CD4-positive, alpha-beta T cell (primary cell): ENCODE measurements at regions of chr1 and their contacts with region 1.

Region 1: GRCh38 chr1:42035830-42036604 is 117.2 kb upstream of the GUCA2B start:
- DNase-seq: peak; percentile 94 to 99 (median 97)
- ATAC-seq: peak; percentile 91
- H3K4me3 ChIP-seq: peak overlapping the region; percentile 70
- H3K4me3 Mint-ChIP-seq: peak overlapping the region; percentile 81
- H3K27ac ChIP-seq: peak overlapping the region in 1 of 2 donors; percentile 14
- H3K27ac Mint-ChIP-seq: peak overlapping the region; percentile 74
- H3K4me1 ChIP-seq: peaks cover 40% of the 10 kb centered on the region
- H3K4me1 Mint-ChIP-seq: peaks cover 42% of the 10 kb centered on the region
- H3K27me3 ChIP-seq: no peaks in the 10 kb centered on the region
- H3K27me3 Mint-ChIP-seq: no peaks in the 10 kb centered on the region
- CTCF ChIP-seq: no peak

Region 2: DNA sequence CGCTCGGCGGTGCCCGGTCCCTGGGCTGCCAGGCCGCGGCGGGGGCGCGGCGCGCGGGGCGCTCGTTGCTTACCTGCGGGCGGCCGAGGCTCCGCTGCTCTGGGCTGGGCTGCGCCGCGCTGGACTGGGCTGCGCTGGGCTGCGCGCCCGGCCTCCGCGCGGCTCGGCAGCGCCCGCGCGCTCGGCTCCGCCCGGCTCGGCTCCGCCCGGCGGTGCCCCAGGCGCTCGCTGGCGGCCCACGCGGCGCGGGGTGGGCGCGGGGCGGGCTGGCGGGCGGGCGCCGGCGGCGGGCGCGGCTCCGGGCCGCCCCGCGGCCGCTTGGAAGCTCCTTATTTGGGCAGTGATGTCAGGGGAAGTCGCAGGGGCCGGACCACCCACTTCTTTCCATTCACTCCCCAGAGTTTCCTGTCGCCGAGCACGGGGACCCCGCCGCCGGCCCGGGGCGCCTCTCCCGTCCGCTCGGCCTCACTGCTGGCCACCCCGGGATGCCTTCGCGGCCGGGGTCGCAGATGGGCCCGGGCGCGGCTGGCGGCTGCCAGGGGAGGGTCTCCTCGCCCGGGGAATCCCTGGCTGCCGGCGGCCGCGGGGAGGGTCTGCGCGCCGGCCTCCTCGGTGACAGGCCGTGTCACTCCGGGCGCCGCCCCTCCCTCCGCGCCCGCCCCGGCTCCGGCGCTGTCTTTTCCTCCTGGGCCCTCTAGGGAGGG is 373.8 kb before region 1 on chr1:
- CTCF ChIA-PET with region 1: no interaction called
- POLR2A ChIA-PET with region 1: no interaction called
- intact Hi-C with region 1: loop called in 1 of 2 experiments (anchors 1 kb)
- DNase-seq: peak; percentile 39 to 90 (median 60)
- ATAC-seq: peak; percentile 78
- H3K4me3 ChIP-seq: peak overlapping the region; percentile 69
- H3K4me3 Mint-ChIP-seq: peak overlapping the region; percentile 58
- H3K27ac ChIP-seq: peak overlapping the region; percentile 55 to 63
- H3K27ac Mint-ChIP-seq: no peak overlapping the region
- H3K4me1 ChIP-seq: peaks cover 91% of the 10 kb centered on the region
- H3K4me1 Mint-ChIP-seq: peaks cover 84% of the 10 kb centered on the region
- H3K27me3 ChIP-seq: no peaks in the 10 kb centered on the region
- H3K27me3 Mint-ChIP-seq: no peaks in the 10 kb centered on the region
- CTCF ChIP-seq: no peak

Region 3: DNA sequence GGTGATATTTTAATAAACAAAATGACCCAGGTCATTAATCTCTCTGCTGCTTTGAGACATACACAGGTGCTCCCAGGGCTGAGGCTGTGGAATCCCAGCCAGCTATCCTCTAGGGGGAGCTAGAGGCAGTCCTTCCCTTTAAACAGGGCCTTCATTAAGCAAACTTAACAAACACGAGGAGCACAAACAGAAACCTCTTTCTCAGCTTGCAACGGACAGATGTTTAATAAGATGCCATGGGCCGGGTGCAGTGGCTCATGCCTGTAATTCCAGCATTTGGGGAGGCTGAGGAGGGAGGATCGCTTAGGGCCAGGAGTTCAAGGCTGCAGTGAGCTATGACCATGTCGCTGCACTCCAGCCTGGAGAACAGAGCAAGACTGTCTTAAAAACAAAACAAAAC is 224.0 kb before region 1 on chr1:
- CTCF ChIA-PET with region 1: no interaction called
- POLR2A ChIA-PET with region 1: no interaction called
- intact Hi-C with region 1: loop called (anchors 5 to 10 kb)
- DNase-seq: peak in 11 of 14 experiments; percentile 25 to 78 (median 33)
- ATAC-seq: peak; percentile 72
- H3K4me3 ChIP-seq: no peak overlapping the region
- H3K4me3 Mint-ChIP-seq: no peak overlapping the region
- H3K27ac ChIP-seq: no peak overlapping the region
- H3K27ac Mint-ChIP-seq: no peak overlapping the region
- H3K4me1 ChIP-seq: peaks cover 32% of the 10 kb centered on the region
- H3K4me1 Mint-ChIP-seq: peaks cover 32% of the 10 kb centered on the region
- H3K27me3 ChIP-seq: no peaks in the 10 kb centered on the region
- H3K27me3 Mint-ChIP-seq: no peaks in the 10 kb centered on the region
- CTCF ChIP-seq: peak; percentile 55

Region 4: GRCh38 chr1:41898191-41898713 is 137.8 kb before region 1 on chr1:
- CTCF ChIA-PET with region 1: interaction called, 3 read pairs
- POLR2A ChIA-PET with region 1: no interaction called
- intact Hi-C with region 1: loop called in 1 of 2 experiments (anchors 5 kb)
- DNase-seq: peak; percentile 50 to 95 (median 74)
- ATAC-seq: peak; percentile 96
- H3K4me3 ChIP-seq: peak overlapping the region; percentile 27
- H3K4me3 Mint-ChIP-seq: peak overlapping the region; percentile 78
- H3K27ac ChIP-seq: peak overlapping the region; percentile 59 to 78
- H3K27ac Mint-ChIP-seq: peak overlapping the region; percentile 98
- H3K4me1 ChIP-seq: peaks cover 98% of the 10 kb centered on the region
- H3K4me1 Mint-ChIP-seq: peaks cover 91% of the 10 kb centered on the region
- H3K27me3 ChIP-seq: no peaks in the 10 kb centered on the region
- H3K27me3 Mint-ChIP-seq: no peaks in the 10 kb centered on the region
- CTCF ChIP-seq: no peak

Region 5: GRCh38 chr1:41980827-41981653 is 55.0 kb before region 1 on chr1:
- CTCF ChIA-PET with region 1: no interaction called
- POLR2A ChIA-PET with region 1: no interaction called
- intact Hi-C with region 1: no loop called
- DNase-seq: peak in 3 of 14 experiments; percentile 19 to 37 (median 32)
- ATAC-seq: peak; percentile 41
- H3K4me3 ChIP-seq: no peak overlapping the region
- H3K4me3 Mint-ChIP-seq: peak overlapping the region; percentile 32
- H3K27ac ChIP-seq: no peak overlapping the region
- H3K27ac Mint-ChIP-seq: peak overlapping the region; percentile 24
- H3K4me1 ChIP-seq: peaks cover 17% of the 10 kb centered on the region
- H3K4me1 Mint-ChIP-seq: peaks cover 37% of the 10 kb centered on the region
- H3K27me3 ChIP-seq: no peaks in the 10 kb centered on the region
- H3K27me3 Mint-ChIP-seq: no peaks in the 10 kb centered on the region
- CTCF ChIP-seq: no peak

Region 6: GRCh38 chr1:42335050-42335808 is 299.2 kb after region 1 on chr1 and contains the start of gene FOXJ3:
- CTCF ChIA-PET with region 1: no interaction called
- POLR2A ChIA-PET with region 1: no interaction called
- intact Hi-C with region 1: loop called in 1 of 2 experiments (anchors 10 kb)
- DNase-seq: peak; percentile 87 to 99 (median 92)
- ATAC-seq: peak; percentile 93
- H3K4me3 ChIP-seq: peak within 1 kb of the TSS; percentile 88
- H3K4me3 Mint-ChIP-seq: peak within 1 kb of the TSS; percentile 97
- H3K27ac ChIP-seq: peak within 1 kb of the TSS; percentile 84 to 86
- H3K27ac Mint-ChIP-seq: peak within 1 kb of the TSS; percentile 86
- H3K4me1 ChIP-seq: peaks cover 17% of the 10 kb centered on the region
- H3K4me1 Mint-ChIP-seq: peaks cover 55% of the 10 kb centered on the region
- H3K27me3 ChIP-seq: no peaks in the 10 kb centered on the region
- H3K27me3 Mint-ChIP-seq: no peaks in the 10 kb centered on the region
- CTCF ChIP-seq: no peak
- total RNA-seq, gene FOXJ3: 73.1 to 74.9 TPM

Region 7: GRCh38 chr1:42681741-42682483 is 645.9 kb after region 1 on chr1 and contains the start of gene YBX1:
- CTCF ChIA-PET with region 1: no interaction called
- POLR2A ChIA-PET with region 1: no interaction called
- intact Hi-C with region 1: loop called in 1 of 2 experiments (anchors 10 kb)
- DNase-seq: peak; percentile 89 to 99 (median 93)
- ATAC-seq: peak; percentile 90
- H3K4me3 ChIP-seq: peak within 1 kb of the TSS; percentile 80
- H3K4me3 Mint-ChIP-seq: peak within 1 kb of the TSS; percentile 100
- H3K27ac ChIP-seq: peak within 1 kb of the TSS; percentile 83 to 87
- H3K27ac Mint-ChIP-seq: peak within 1 kb of the TSS; percentile 94
- H3K4me1 ChIP-seq: peaks cover 36% of the 10 kb centered on the region
- H3K4me1 Mint-ChIP-seq: peaks cover 50% of the 10 kb centered on the region
- H3K27me3 ChIP-seq: no peaks in the 10 kb centered on the region
- H3K27me3 Mint-ChIP-seq: no peaks in the 10 kb centered on the region
- CTCF ChIP-seq: no peak
- total RNA-seq, gene YBX1: 372 to 389 TPM

Region 8: DNA sequence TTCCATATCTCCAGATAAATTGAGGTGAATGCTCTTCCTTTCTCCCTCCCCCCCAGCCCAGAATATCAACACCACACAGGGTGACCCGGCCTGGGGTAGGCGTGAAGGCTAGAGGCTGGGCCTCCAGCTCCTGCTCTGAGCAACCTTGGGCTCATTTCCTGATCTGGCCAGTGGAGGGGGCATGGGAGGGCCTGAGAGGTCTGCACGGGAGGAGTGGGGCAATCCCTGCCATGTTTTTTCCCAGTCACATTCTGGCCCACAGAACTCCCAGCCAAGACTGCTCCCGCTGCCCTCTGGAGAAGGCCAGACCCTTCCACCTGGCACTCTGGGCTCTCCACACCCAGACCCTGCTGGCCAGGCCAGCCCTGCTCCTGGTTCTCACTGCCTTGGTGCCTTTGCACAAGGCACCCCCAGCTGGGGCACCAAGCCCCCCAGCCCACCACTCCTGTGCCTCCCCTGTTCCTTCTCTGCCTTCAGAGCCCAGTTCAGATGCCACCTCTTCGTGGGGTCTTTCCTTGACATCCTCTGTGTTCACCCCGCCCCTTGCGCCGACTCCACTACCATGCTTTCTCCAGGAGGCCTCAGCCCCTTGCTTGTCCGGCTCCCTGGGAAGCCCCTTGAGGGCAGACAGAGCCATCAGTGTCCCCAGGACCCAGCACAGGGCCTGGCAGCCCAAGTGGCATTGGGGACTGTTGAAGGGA is 700.3 kb after region 1 on chr1:
- CTCF ChIA-PET with region 1: no interaction called
- POLR2A ChIA-PET with region 1: no interaction called
- intact Hi-C with region 1: no loop called
- DNase-seq: no peak
- ATAC-seq: no peak
- H3K4me3 ChIP-seq: no peak overlapping the region
- H3K4me3 Mint-ChIP-seq: no peak overlapping the region
- H3K27ac ChIP-seq: no peak overlapping the region
- H3K27ac Mint-ChIP-seq: no peak overlapping the region
- H3K4me1 ChIP-seq: peaks cover 7% of the 10 kb centered on the region
- H3K4me1 Mint-ChIP-seq: peaks cover 9% of the 10 kb centered on the region
- H3K27me3 ChIP-seq: no peaks in the 10 kb centered on the region
- H3K27me3 Mint-ChIP-seq: no peaks in the 10 kb centered on the region
- CTCF ChIP-seq: no peak